ENCODE measurements at regions of chrX and their contacts with region 1.

Region 1: GRCh38 chrX:55342533-55343501 is 78.1 kb upstream of the PAGE3 start:
- DNase-seq: no peak
- H3K4me3 ChIP-seq: no peak overlapping the region
- H3K27ac ChIP-seq: no peak overlapping the region
- H3K4me1 ChIP-seq: no peaks in the 10 kb centered on the region
- H3K27me3 ChIP-seq: no peaks in the 10 kb centered on the region
- CTCF ChIP-seq: peak in 2 of 3 experiments; percentile 25 to 33

Region 2: GRCh38 chrX:54386314-54386713 is 956.5 kb before region 1 on chrX:
- intact Hi-C with region 1: no loop called
- DNase-seq: no peak
- H3K4me3 ChIP-seq: no peak overlapping the region
- H3K27ac ChIP-seq: no peak overlapping the region
- H3K4me1 ChIP-seq: no peaks in the 10 kb centered on the region
- H3K27me3 ChIP-seq: no peaks in the 10 kb centered on the region
- CTCF ChIP-seq: no peak

Region 3: DNA sequence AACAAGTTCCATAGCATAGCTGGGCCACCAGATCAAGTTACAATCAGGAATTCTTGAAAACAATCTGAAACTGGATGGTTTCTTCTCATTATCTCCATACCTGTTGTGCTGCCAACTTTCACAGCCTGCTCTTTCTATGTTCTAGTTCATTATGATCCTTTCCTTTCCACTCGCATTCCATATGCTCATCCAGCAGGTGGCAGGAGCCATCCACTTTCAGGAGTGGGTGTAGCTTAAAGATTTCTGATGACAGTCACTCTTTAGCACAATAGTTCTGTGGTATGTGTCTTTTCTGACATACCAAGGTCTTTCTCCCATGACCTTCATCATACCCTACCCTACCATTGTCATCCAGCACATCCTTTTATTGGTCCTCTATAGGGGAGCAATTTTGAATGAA is 207.6 kb before region 1 on chrX:
- intact Hi-C with region 1: loop called (anchors 10 kb)
- DNase-seq: no peak
- H3K4me3 ChIP-seq: no peak overlapping the region
- H3K27ac ChIP-seq: no peak overlapping the region
- H3K4me1 ChIP-seq: no peaks in the 10 kb centered on the region
- H3K27me3 ChIP-seq: no peaks in the 10 kb centered on the region
- CTCF ChIP-seq: peak in 2 of 3 experiments; percentile 30 to 52